ENCODE measurements at regions of chr2 and their contacts with region 1.

Region 1: GRCh38 chr2:224778474-224778877 is 62.3 kb upstream of the CCDC195 start:
- DNase-seq: peak; percentile 76
- H3K4me3 Mint-ChIP-seq: no peak overlapping the region
- H3K27ac Mint-ChIP-seq: peak overlapping the region; percentile 33
- H3K4me1 Mint-ChIP-seq: peaks cover 3% of the 10 kb centered on the region
- H3K27me3 Mint-ChIP-seq: no peaks in the 10 kb centered on the region

Region 2: GRCh38 chr2:224601923-224602322 is 176.6 kb before region 1 on chr2:
- CTCF ChIA-PET with region 1: no interaction called
- POLR2A ChIA-PET with region 1: no interaction called
- intact Hi-C with region 1: no loop called
- DNase-seq: no peak
- H3K4me3 Mint-ChIP-seq: no peak overlapping the region
- H3K27ac Mint-ChIP-seq: no peak overlapping the region
- H3K4me1 Mint-ChIP-seq: peaks cover 15% of the 10 kb centered on the region
- H3K27me3 Mint-ChIP-seq: peaks cover 11% of the 10 kb centered on the region

Region 3: GRCh38 chr2:224650815-224651439 is 127.5 kb before region 1 on chr2:
- CTCF ChIA-PET with region 1: interaction called, 20 read pairs
- POLR2A ChIA-PET with region 1: no interaction called
- intact Hi-C with region 1: loop called (anchors 2 kb)
- DNase-seq: no peak
- H3K4me3 Mint-ChIP-seq: no peak overlapping the region
- H3K27ac Mint-ChIP-seq: no peak overlapping the region
- H3K4me1 Mint-ChIP-seq: peaks cover 2% of the 10 kb centered on the region
- H3K27me3 Mint-ChIP-seq: peaks cover 1% of the 10 kb centered on the region

Region 4: GRCh38 chr2:224736227-224736626 is 42.2 kb before region 1 on chr2:
- CTCF ChIA-PET with region 1: no interaction called
- POLR2A ChIA-PET with region 1: no interaction called
- intact Hi-C with region 1: no loop called
- DNase-seq: no peak
- H3K4me3 Mint-ChIP-seq: no peak overlapping the region
- H3K27ac Mint-ChIP-seq: no peak overlapping the region
- H3K4me1 Mint-ChIP-seq: no peaks in the 10 kb centered on the region
- H3K27me3 Mint-ChIP-seq: no peaks in the 10 kb centered on the region

Region 5: DNA sequence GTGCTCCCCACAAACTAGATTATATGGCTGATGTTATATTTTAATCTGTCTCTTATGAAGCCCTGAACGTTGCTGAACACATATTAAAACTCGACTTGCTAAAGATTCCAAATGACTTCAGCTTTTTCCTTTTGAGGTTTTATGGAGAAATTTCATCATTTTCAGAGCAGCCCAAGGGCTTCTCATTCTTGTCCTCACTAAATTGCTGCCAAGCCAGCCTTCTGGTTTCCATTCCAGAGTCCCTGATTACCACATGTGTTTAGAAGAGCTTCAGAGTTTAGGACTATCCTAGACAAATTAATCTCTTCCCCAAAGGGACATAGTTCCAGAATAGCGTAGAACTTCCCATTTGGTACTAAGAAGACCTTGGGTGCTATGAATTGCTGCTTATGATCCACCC is 15.5 kb after region 1 on chr2:
- CTCF ChIA-PET with region 1: interaction called, 20 read pairs
- POLR2A ChIA-PET with region 1: interaction called, 3 read pairs
- intact Hi-C with region 1: no loop called
- DNase-seq: no peak
- H3K4me3 Mint-ChIP-seq: no peak overlapping the region
- H3K27ac Mint-ChIP-seq: no peak overlapping the region
- H3K4me1 Mint-ChIP-seq: no peaks in the 10 kb centered on the region
- H3K27me3 Mint-ChIP-seq: no peaks in the 10 kb centered on the region